Activated B cell treated with CpG ODN at 0.5 μM for 24 hours (primary cell): ENCODE measurements at regions of chr3 and their contacts with region 1.

Region 1: GRCh38 chr3:113736548-113737089 is 9.4 kb downstream of the NAA50 start:
- DNase-seq: no peak
- ATAC-seq: peak; percentile 86
- H3K4me3 Mint-ChIP-seq: no peak overlapping the region
- H3K27ac Mint-ChIP-seq: peak overlapping the region; percentile 76
- H3K4me1 Mint-ChIP-seq: peaks cover 40% of the 10 kb centered on the region
- H3K27me3 Mint-ChIP-seq: no peaks in the 10 kb centered on the region
- CTCF ChIP-seq: no peak

Region 2: DNA sequence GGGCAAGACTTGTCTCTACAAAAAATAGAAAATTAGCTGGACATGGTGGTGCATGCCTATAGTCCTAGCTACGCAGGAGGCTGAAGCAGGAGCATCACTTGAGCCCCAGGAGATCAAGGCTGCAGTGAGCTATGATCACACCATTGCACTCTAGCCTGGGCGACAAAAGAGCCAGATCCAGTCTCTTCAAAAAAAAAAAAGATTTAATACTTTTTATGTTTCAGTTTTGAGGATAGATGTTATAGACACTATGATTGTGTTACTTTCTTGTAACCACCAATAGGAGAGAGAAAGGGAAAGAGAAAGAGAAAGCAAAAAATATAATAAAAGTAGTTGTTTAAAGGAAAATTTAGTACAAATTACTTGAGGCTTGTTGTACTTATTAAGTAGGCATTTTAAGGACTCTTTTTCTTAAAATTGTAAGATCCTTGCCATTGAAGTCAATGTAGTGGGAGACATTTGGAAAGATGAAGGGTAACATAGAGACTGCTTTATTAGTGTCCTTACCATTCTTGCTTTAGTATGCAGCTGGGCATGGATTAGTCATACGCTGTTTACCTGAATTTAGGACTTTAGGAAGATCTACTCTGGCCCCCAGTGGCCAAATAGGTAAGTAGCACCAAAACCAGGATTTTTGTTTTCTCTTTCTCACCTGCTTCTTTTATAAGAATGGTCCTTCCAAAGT is 176.1 kb after region 1 on chr3:
- CTCF ChIA-PET with region 1: interaction called, 38 read pairs
- POLR2A ChIA-PET with region 1: interaction called, 4 read pairs
- intact Hi-C with region 1: loop called (anchors 1 kb)
- DNase-seq: no peak
- ATAC-seq: peak; percentile 97
- H3K4me3 Mint-ChIP-seq: peak overlapping the region; percentile 42
- H3K27ac Mint-ChIP-seq: no peak overlapping the region
- H3K4me1 Mint-ChIP-seq: peaks cover 6% of the 10 kb centered on the region
- H3K27me3 Mint-ChIP-seq: no peaks in the 10 kb centered on the region
- CTCF ChIP-seq: no peak